Left colon (tissue), 2 donors: ENCODE measurements at regions of chr17 and their contacts with region 1.

Region 1: DNA sequence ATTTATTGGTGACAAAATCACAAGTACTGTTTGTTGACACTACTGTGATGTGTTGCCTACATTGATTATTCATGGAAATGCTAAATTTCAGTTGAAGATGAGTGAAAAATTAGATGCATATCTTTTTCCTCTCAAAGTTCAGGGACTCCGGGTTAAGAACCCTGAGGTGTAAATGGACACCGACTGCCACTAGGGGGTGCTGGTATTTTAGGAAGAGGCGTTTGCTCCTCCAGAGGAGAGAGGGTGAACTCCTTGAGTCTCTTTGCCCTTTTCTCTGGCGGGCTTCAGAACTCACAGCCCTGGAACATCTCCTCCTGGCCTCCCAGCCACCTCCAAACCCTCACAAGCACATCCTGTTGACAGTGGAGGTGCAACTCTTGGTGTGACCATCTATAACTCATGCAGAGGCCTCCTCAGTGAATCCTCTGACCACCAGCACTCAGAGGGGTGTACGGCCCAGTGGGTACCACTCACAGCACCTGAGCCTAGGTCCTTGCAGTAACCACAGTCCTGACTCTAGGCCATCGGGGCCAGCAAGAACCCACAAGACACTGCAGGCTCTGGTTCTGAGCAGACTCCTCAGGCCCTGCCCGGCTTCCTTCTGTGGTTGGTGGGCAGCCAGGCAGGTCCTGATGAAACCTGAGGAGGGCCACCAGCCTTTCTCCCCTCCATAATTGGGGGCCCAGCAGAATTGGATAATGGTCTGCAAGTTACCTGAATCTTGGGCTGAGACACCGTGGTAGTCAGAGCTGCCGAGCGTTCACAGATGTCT is 26.2 kb upstream of the PIK3R5 start:
- DNase-seq: peak; percentile 50 to 77
- ATAC-seq: peak; percentile 75

Region 2: DNA sequence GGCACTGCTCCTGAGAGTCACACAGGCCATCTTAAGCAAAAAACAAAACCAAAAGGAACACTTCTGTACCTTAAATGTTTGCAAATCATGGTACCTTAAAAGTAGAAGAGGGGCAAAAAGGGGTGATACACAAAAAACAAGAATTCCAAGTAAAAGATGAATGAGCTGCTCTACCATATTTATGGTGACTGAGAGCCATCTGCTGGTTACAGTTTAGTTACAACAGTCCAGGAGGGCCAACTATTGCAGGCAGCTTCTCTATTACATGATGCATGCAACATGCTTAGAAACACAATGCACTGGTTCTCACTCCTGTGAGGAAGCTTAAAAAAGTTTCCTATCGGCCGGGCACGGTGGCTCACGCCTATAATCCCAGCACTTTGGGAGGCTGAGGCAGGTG is 530.4 kb after region 1 on chr17:
- intact Hi-C with region 1: loop called in 1 of 2 experiments (anchors 5 kb)
- DNase-seq: no peak
- ATAC-seq: peak; percentile 75